Activated CD8-positive, alpha-beta T cell treated with anti-CD3 and anti-CD28 coated beads, Interleukin-2, amount 10 ng/mL, durations not matched to agents 7 days and 5 days (primary cell): ENCODE measurements at regions of chr11 and their contacts with region 1.

Region 1: GRCh38 chr11:123407130-123407995 is 22.7 kb upstream of the GRAMD1B start:
- DNase-seq: peak; percentile 77
- ATAC-seq: peak; percentile 85
- H3K4me3 Mint-ChIP-seq: peak overlapping the region; percentile 65
- H3K27ac Mint-ChIP-seq: no peak overlapping the region
- H3K4me1 Mint-ChIP-seq: peaks cover 30% of the 10 kb centered on the region
- H3K27me3 Mint-ChIP-seq: peaks cover 8% of the 10 kb centered on the region

Region 2: DNA sequence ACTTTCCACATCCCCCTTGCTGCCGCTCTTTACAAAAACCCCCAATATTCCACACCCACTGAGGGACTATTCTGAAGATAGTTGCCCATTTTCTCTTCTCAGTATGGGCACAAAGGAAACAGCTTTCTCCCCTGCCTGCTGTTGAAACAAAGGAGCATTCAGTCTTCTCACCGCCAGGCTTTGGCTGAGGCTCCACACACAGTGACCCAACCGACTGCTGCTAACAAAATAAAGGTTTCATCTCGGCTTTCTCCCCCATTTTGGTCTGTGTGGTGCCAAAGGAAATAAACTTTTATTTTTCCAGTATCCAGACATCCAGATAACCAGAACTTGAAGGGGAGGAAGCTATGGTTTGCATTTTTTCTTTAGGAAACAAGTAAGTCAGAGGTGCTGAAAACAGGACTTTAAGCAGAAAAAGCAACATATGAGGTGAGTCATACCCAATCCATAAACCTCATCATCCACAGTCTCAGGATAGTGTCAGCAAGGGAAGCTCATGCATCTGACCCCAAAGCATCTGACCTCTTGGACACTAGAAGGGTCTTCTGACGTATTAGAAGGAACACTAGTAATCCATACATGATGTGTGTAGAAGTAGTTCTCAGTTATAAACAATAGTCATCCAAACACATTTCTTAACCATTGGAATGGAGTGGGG is 218.7 kb before region 1 on chr11:
- CTCF ChIA-PET with region 1: no interaction called
- POLR2A ChIA-PET with region 1: no interaction called
- DNase-seq: no peak
- ATAC-seq: no peak
- H3K4me3 Mint-ChIP-seq: no peak overlapping the region
- H3K27ac Mint-ChIP-seq: no peak overlapping the region
- H3K4me1 Mint-ChIP-seq: peaks cover 26% of the 10 kb centered on the region
- H3K27me3 Mint-ChIP-seq: peaks cover 68% of the 10 kb centered on the region

Region 3: GRCh38 chr11:123301696-123302400 is 105.5 kb before region 1 on chr11:
- CTCF ChIA-PET with region 1: interaction called, 30 read pairs
- POLR2A ChIA-PET with region 1: no interaction called
- DNase-seq: peak; percentile 77
- ATAC-seq: peak; percentile 96
- H3K4me3 Mint-ChIP-seq: peak overlapping the region; percentile 44
- H3K27ac Mint-ChIP-seq: no peak overlapping the region
- H3K4me1 Mint-ChIP-seq: peaks cover 41% of the 10 kb centered on the region
- H3K27me3 Mint-ChIP-seq: peaks cover 3% of the 10 kb centered on the region

Region 4: DNA sequence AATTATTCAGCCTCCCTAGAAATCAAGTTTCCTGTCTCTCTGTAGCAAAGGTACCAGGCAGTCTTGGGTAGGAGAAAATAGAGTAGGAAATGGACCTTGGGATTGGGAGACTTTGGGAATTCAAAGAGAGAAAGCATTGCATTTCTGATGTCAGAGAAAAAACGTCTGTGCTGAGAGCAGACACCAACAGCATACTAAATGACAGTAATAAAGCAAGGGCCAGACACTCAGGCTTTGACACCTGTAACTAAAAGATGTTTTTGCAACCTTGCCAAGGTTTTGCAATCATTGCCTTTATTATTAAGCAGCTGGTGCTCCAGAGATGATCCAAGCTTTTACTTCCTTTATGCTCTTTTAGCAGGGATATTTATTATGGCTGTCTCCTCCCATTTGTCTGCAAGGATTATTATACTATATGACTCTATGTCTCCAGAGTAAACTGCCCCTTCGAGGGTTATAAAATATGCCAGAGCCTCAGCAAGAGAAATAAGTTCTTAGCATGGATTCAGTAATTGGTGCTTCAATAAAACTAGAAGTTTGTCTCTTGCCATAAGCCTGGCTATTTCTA is 62.5 kb before region 1 on chr11:
- CTCF ChIA-PET with region 1: no interaction called
- POLR2A ChIA-PET with region 1: no interaction called
- DNase-seq: no peak
- ATAC-seq: no peak
- H3K4me3 Mint-ChIP-seq: no peak overlapping the region
- H3K27ac Mint-ChIP-seq: no peak overlapping the region
- H3K4me1 Mint-ChIP-seq: no peaks in the 10 kb centered on the region
- H3K27me3 Mint-ChIP-seq: peaks cover 14% of the 10 kb centered on the region

Region 5: DNA sequence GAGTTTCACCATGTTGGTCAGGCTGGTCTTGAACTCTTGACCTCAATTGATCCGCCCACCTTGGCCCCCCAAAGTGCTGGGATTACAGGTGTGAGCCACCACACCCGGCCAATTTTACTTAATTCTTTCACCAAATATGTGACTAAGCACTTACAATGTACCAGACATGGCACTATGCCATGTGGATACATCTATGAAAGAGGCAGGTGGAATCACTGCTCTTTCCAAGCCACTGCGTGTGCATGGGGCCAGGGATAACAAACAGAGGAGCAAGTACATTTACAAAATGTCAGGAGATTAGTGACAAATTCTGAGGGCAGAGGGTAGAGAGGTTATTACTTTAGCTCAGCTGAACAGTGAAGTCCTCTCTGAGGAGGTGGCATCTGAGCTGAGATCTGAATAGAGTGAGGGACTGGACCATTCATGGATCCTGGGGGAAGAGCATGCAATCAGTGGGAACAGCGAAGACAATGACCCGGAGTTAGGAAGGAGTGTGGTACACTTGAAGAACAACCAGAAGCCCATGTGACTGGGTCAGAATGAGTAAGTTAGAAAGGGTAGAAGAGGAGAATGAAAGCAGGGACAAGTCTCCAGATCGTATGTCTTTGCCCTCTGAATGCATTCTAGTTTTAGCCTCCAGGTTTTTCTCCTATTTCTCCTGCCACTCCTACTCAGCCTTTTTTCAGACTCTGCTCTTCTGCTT is 15.6 kb before region 1 on chr11:
- CTCF ChIA-PET with region 1: interaction called, 31 read pairs
- POLR2A ChIA-PET with region 1: no interaction called
- DNase-seq: no peak
- ATAC-seq: no peak
- H3K4me3 Mint-ChIP-seq: no peak overlapping the region
- H3K27ac Mint-ChIP-seq: no peak overlapping the region
- H3K4me1 Mint-ChIP-seq: peaks cover 13% of the 10 kb centered on the region
- H3K27me3 Mint-ChIP-seq: peaks cover 15% of the 10 kb centered on the region

Region 6: GRCh38 chr11:123450623-123451022 is 43.3 kb after region 1 on chr11:
- CTCF ChIA-PET with region 1: interaction called, 38 read pairs
- POLR2A ChIA-PET with region 1: interaction called, 3 read pairs
- DNase-seq: no peak
- ATAC-seq: no peak
- H3K4me3 Mint-ChIP-seq: no peak overlapping the region
- H3K27ac Mint-ChIP-seq: peak overlapping the region; percentile 82
- H3K4me1 Mint-ChIP-seq: peaks cover 68% of the 10 kb centered on the region
- H3K27me3 Mint-ChIP-seq: no peaks in the 10 kb centered on the region

Region 7: GRCh38 chr11:123478352-123478987 is 71.1 kb after region 1 on chr11:
- CTCF ChIA-PET with region 1: interaction called, 374 read pairs
- POLR2A ChIA-PET with region 1: interaction called, 9 read pairs
- DNase-seq: peak; percentile 39
- ATAC-seq: peak; percentile 47
- H3K4me3 Mint-ChIP-seq: peak overlapping the region; percentile 15
- H3K27ac Mint-ChIP-seq: peak overlapping the region; percentile 18
- H3K4me1 Mint-ChIP-seq: peaks cover 49% of the 10 kb centered on the region
- H3K27me3 Mint-ChIP-seq: no peaks in the 10 kb centered on the region

Region 8: GRCh38 chr11:123560006-123560405 is 152.6 kb after region 1 on chr11:
- CTCF ChIA-PET with region 1: interaction called, 12 read pairs
- POLR2A ChIA-PET with region 1: no interaction called
- DNase-seq: peak; percentile 52
- ATAC-seq: peak; percentile 79
- H3K4me3 Mint-ChIP-seq: peak overlapping the region; percentile 32
- H3K27ac Mint-ChIP-seq: peak overlapping the region; percentile 31
- H3K4me1 Mint-ChIP-seq: peaks cover 12% of the 10 kb centered on the region
- H3K27me3 Mint-ChIP-seq: peaks cover 2% of the 10 kb centered on the region